ENCODE measurements at regions of chr1 and their contacts with region 1.

Region 1: DNA sequence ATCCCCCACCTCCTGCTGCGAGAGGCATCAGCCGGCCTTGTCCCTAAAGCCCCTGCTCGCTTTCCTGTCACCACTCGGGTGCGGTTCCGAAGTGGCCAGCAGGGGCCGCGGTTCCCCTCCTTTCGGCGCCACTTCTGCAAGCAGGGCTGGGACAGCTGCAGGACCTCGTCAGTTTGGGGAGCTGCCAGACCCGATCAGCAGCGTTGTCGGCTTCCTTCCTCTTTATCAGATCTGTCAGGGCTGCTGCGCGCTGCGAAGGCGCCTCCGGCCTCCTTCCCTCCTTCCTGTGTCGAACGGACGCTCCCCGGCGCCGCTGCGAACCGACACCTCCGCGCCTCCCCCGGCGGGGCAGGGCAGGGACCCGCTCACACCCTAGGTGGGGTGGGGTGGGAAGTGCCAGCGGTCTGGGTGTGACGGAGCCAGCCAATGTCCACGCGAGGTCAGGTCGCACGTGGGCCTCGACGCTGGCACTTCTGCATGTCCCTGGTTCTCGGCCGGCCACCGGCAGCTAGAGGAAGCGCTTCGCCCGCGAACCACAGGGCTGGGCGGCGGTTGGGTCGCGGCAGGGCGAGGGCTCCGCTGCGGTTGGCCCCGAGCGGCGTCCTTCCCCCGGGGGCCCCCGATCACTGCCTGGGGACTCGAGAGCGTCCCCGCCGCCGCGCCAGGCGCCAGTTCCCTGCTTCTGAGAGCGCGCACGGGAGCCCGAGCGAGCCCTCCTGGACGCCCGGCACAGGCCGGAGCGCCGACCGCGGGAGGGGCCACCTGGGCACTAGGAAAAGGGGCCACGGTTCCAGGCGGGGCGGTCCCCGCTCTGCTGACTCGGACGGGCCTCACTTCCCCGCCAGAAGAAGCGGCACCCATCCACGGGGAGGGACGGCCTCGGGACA is 81.8 kb downstream of the RUNX3 start:
- DNase-seq: peak; percentile 91 to 95
- ATAC-seq: peak; percentile 89

Region 2: GRCh38 chr1:24694380-24694843 is 153.8 kb before region 1 on chr1:
- intact Hi-C with region 1: loop called in 1 of 2 experiments (anchors 10 kb)
- DNase-seq: no peak
- ATAC-seq: peak; percentile 77

Region 3: DNA sequence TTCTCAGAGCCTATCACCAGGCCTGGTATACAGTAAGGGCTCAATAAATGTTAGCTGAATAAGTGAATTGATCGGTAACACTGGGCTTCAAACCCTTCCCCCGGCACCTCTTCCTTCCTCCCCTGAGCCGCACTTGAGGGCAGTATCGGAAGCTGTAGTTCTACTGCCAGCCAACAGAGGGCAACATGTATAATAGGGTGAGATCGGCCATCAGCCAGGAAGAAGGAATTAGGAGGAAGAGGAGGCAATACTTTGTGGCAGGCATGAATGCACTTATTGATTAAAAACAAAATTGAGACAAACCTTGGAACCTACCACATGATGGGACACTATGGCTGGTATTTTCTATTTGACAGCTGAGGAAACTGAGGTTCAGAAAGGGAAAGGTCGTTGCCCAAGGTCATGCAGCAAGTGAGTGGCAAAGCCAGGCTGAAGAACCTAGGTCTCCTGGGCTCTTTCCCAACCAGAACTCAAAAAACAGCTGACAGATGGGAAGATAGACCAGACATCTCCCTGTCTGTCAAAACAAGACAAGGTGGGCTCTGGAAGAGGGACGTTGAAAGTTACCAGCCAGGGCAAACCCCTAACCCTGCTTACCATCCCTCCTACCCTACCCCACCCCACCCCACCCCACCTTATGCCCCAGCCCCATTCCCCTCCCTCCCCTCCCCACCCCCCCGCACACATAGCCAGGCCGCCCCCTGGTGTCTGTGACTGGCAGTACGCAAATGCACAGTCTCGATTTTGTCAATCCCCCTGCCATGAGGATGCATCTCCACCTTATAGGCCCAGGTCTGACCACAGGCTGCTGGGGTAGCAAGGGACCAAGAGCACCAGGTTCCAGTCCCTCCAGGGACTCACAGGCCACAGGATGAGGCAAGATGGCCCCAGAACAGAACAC is 189.2 kb after region 1 on chr1:
- intact Hi-C with region 1: loop called (anchors 2 to 5 kb)
- DNase-seq: peak in 1 of 2 donors; percentile 55
- ATAC-seq: peak; percentile 56

Region 4: GRCh38 chr1:25204797-25205480 is 356.7 kb after region 1 on chr1:
- intact Hi-C with region 1: loop called in 1 of 2 experiments (anchors 10 kb)
- DNase-seq: no peak
- ATAC-seq: peak; percentile 33